ENCODE measurements at regions of chr12 and their contacts with region 1.

Region 1: GRCh38 chr12:123365025-123365917 is 624 bp upstream of the SBNO1 start:
- DNase-seq: peak; percentile 95 to 99 (median 96)

Region 2: DNA sequence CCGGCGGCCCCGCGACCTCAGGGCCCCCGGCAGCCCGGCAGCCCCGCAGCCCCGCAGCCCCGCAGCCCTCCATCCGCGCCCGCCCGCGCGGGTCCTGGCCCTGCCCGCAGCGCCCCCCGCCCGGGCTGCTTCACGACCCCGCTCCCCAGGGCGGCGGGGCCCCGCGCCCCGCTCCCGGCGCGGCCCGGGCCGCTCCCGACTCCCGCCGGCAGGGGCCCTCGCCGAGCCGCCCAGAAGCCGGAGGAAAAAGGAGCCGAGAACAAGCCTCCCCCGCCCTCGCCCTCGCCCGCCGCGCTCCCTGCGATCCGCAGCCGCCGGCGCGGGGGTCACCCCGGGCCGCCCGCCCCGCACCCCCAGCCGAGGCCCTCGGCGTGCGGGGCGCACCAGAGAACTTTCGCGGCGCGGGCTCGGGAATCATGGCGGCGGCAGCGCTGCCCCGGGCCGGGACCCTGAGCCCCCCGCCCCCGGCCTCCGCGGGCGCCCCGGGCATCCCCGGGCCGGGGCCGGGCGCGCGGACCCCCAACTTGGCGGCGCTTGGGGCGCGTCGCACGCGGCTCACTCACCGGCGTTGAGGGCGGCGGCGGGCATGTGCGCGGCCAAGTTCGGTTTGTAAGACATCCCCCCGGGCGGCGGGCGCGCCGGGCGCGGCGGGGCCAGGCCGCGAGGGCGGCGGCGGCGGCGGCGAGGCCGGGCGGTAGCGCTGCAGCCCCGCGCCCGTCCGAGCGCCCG is 94.1 kb before region 1 on chr12:
- intact Hi-C with region 1: loop called (anchors 1 kb)
- DNase-seq: peak; percentile 63 to 96 (median 76)

Region 3: DNA sequence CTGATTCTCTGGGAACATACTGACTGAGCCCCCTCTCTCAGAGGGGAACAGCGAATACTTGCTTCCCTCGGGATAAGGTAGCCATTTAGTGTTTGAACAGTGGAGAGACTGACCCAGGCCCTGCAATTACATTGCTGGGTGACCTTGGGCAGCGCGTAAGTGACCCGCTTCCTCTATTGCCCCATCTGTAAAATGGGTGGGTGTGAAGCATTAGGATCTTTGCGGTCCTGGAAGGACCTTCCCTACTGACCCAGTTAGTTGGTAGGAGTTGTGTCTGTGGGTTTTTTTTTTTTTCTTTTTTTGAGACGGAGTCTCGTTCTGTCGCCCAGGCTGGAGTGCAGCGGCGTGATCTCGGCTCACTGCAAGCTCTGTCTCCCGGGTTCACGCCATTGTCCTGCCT is 17.4 kb after region 1 on chr12:
- intact Hi-C with region 1: loop called (anchors 1 kb)
- DNase-seq: peak in 1 of 10 donors; percentile 12

Region 4: DNA sequence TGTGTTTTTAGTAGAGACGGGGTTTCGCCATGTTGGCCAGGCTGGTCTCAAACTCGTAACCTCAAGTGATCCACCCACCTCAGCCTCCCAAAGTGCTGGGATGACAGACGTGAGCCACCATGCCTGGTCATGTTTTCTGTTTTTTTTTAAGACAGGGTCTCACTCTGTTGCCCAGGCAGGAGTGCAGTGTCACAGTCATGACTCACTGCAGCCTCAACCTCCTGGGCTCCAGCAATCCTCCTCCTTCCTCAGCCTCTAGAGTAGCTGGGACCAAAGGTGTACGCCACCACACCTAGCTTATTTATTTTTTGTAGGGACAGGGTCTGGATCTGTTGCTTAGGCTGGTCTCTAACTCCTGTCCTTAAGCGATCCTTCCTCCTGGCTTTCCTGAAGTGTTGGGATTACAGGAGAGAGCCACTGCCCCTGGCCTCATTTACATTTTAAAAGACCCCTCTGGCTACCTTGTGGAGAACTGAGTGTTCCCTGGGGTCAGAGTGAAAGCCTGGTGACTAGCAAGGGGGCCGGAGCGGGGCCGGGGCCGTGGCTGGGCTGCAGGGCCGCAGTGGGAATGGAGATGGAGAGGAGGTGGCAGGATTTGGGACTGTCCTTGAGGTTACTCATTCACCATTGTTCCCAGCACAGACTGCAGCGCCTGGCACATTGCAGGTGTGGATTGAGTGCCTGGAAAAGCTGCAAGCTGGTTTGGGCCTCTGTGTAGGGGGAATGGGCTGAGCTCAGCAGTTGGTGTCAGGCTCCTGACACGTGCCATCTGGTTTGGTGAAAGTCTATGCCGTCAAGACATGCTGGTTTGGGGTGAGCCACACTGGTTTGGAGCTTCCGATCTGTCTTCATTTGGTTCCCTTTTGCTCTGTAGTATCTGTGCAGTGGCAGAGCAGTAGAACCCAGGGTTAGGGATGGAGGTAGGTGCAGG is 36.7 kb after region 1 on chr12:
- intact Hi-C with region 1: no loop called
- DNase-seq: peak in 4 of 10 donors; percentile 22 to 90 (median 62)